Activated CD4-positive, alpha-beta memory T cell treated with anti-CD3 and anti-CD28 coated beads for 36 hours (primary cell): ENCODE measurements at regions of chr17 and their contacts with region 1.

Region 1: GRCh38 chr17:7296189-7296902 is 1.9 kb upstream of the YBX2 start:
- DNase-seq: peak; percentile 79
- H3K4me3 Mint-ChIP-seq: peak overlapping the region; percentile 35
- H3K27ac Mint-ChIP-seq: no peak overlapping the region
- H3K4me1 Mint-ChIP-seq: peaks cover 21% of the 10 kb centered on the region
- H3K27me3 Mint-ChIP-seq: peaks cover 26% of the 10 kb centered on the region

Region 2: GRCh38 chr17:7219812-7220581 is 76.3 kb before region 1 on chr17 and contains the starts of genes ACADVL and DLG4:
- CTCF ChIA-PET with region 1: interaction called, 48 read pairs
- POLR2A ChIA-PET with region 1: interaction called, 8 read pairs
- intact Hi-C with region 1: loop called (anchors 2 kb)
- DNase-seq: peak; percentile 90
- H3K4me3 Mint-ChIP-seq: peak within 1 kb of the TSS; percentile 90
- H3K27ac Mint-ChIP-seq: peak within 1 kb of the TSS; percentile 92
- H3K4me1 Mint-ChIP-seq: peaks cover 53% of the 10 kb centered on the region
- H3K27me3 Mint-ChIP-seq: no peaks in the 10 kb centered on the region
- total RNA-seq, gene ACADVL: 332 to 340 TPM
- total RNA-seq, gene DLG4: 7.9 to 8.4 TPM

Region 3: GRCh38 chr17:7263083-7264078 is 33.0 kb before region 1 on chr17:
- CTCF ChIA-PET with region 1: interaction called, 29 read pairs
- POLR2A ChIA-PET with region 1: no interaction called
- intact Hi-C with region 1: no loop called
- DNase-seq: peak; percentile 49
- H3K4me3 Mint-ChIP-seq: peak overlapping the region; percentile 52
- H3K27ac Mint-ChIP-seq: no peak overlapping the region
- H3K4me1 Mint-ChIP-seq: peaks cover 26% of the 10 kb centered on the region
- H3K27me3 Mint-ChIP-seq: peaks cover 21% of the 10 kb centered on the region

Region 4: GRCh38 chr17:7280519-7281429 is 15.6 kb before region 1 on chr17:
- CTCF ChIA-PET with region 1: interaction called, 145 read pairs
- POLR2A ChIA-PET with region 1: interaction called, 3 read pairs
- intact Hi-C with region 1: loop called (anchors 1 kb)
- DNase-seq: peak; percentile 91
- H3K4me3 Mint-ChIP-seq: peak overlapping the region; percentile 65
- H3K27ac Mint-ChIP-seq: no peak overlapping the region
- H3K4me1 Mint-ChIP-seq: peaks cover 12% of the 10 kb centered on the region
- H3K27me3 Mint-ChIP-seq: peaks cover 16% of the 10 kb centered on the region

Region 5: GRCh38 chr17:7328840-7329373 is 32.6 kb after region 1 on chr17 and contains the start of gene NEURL4:
- CTCF ChIA-PET with region 1: no interaction called
- POLR2A ChIA-PET with region 1: no interaction called
- intact Hi-C with region 1: no loop called
- DNase-seq: no peak
- H3K4me3 Mint-ChIP-seq: peak within 1 kb of the TSS; percentile 89
- H3K27ac Mint-ChIP-seq: peak within 1 kb of the TSS; percentile 94
- H3K4me1 Mint-ChIP-seq: peaks cover 46% of the 10 kb centered on the region
- H3K27me3 Mint-ChIP-seq: no peaks in the 10 kb centered on the region
- total RNA-seq, gene NEURL4: 26.9 to 29.3 TPM

Region 6: DNA sequence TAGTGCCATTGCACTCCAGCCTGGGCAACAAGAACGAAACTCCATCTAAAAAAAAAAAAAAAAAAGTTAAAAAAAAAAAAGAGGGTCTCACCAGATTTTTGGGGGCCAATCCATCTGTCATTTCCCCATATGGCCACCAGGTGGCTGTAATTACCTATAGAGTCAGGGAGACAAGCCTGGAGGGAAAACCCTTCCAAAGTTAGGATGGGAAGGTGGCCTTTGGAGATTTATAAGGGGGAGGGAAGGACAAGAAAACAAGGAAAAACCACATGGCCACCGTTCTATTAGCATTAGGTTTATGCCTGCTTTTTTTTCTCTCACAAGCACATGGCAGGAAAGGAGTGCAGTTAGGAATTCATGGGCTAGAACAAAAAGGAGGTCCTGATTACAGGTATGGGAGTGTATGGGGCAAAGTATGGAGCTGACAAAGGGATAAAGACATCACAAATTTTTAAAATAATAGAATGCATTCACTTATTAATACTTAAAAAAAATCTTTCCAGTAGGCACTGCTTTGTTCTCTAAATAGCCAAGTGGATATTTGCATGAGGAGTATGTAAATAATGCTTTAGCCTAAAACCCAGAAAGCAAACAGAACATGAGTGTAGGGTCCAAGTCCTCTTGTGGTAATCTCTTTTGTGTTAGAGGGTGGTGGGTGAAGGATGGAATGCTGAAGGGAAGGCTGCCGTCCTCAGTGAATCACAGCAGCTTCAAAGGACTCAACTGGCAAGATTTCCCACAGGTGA is 566.5 kb after region 1 on chr17:
- CTCF ChIA-PET with region 1: no interaction called
- POLR2A ChIA-PET with region 1: no interaction called
- intact Hi-C with region 1: no loop called
- DNase-seq: peak; percentile 39
- H3K4me3 Mint-ChIP-seq: no peak overlapping the region
- H3K27ac Mint-ChIP-seq: no peak overlapping the region
- H3K4me1 Mint-ChIP-seq: peaks cover 16% of the 10 kb centered on the region
- H3K27me3 Mint-ChIP-seq: no peaks in the 10 kb centered on the region